ENCODE measurements at regions of chr1 and their contacts with region 1.

Region 1: DNA sequence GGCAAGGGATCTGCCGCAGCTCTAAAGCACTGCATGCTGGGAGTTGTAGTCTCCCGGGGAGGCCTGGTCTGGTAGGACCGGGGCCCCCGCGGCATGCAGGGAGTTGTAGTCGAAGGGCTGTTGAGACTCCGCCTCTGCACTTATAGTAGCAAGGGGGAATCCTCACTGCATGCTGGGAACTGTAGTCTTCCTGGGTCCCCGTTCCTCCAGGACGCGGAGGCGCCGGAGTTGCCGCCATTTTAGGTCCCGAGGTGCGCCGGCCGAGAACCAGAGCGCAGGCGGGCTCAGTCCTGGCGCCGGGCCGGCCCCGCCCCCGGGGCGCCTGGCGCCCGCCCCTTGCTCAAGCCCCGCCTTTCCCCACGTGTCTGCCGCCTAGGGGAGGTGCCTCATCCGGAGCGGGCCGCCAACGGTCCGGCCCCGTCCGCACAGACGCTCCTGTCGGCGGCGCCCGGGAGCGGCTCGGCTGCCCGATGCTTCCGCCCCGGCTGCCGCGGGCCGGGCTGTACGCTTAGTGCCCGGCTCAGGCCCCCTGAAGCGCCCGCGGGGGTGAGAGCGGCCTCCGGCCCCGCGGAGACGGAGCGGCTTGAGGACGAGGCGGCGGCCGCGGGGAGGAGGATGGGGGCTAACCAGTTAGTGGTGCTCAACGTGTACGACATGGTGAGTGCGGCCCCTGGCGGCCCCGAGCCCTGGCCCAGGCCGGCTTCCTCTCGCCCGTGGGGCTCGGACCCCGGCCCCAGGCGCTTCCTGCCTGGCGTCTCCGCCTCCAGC is at the start of gene DESI2:
- DNase-seq: peak; percentile 98
- H3K4me3 Mint-ChIP-seq: no peak within 1 kb of the TSS
- H3K27ac Mint-ChIP-seq: no peak within 1 kb of the TSS
- H3K4me1 Mint-ChIP-seq: peaks cover 7% of the 10 kb centered on the region
- H3K27me3 Mint-ChIP-seq: peaks cover 20% of the 10 kb centered on the region
- CTCF ChIP-seq: peak; percentile 77
- total RNA-seq, gene DESI2: 29.8 and 39.1 TPM in 2 replicates

Region 2: DNA sequence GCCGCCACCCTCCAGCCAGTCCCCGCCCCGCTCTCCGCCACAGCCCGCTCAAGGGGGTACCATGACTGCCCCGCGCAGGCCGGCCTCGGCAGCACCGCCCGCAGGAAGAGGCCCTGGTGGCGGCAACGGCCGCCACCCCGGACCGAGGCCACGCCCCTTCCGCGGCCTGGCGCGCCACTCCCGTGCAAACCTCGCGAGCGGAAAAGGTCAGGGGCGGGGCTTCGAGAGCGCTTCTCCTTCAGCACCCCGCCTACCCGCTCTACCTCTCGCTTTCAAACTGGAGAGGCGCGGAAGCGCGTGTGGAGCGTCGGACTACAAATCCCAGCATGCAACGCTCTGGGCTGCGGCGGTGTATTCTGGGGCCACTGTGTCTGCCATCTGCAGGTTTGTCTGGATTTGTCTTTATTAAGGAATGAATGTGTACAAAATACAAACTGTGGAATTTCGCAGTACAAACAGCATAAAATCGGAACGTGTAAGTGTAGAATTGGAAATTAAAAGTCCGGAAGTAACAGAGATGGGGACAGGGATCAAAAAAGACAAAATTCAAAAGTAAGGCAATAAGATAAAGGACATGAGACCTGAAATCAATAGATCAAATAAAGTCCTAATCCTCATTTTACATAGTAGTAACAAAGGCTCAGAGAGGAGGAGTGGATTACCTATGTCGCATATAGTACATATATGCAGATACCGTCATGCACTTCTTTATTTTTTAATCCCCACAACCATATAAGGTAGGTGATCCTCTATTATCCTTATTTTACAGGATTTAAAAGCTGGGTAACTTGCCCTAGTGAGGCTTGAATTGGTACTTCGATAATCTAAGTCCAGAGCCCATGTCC is 200.7 kb before region 1 on chr1:
- CTCF ChIA-PET with region 1: no interaction called
- intact Hi-C with region 1: loop called (anchors 10 kb)
- DNase-seq: peak; percentile 100
- H3K4me3 Mint-ChIP-seq: peak overlapping the region; percentile 59
- H3K27ac Mint-ChIP-seq: peak overlapping the region; percentile 60
- H3K4me1 Mint-ChIP-seq: peaks cover 45% of the 10 kb centered on the region
- H3K27me3 Mint-ChIP-seq: no peaks in the 10 kb centered on the region
- CTCF ChIP-seq: no peak

Region 3: GRCh38 chr1:244751271-244751895 is 98.5 kb after region 1 on chr1:
- CTCF ChIA-PET with region 1: no interaction called
- intact Hi-C with region 1: no loop called
- DNase-seq: no peak
- H3K4me3 Mint-ChIP-seq: no peak overlapping the region
- H3K27ac Mint-ChIP-seq: no peak overlapping the region
- H3K4me1 Mint-ChIP-seq: no peaks in the 10 kb centered on the region
- H3K27me3 Mint-ChIP-seq: no peaks in the 10 kb centered on the region
- CTCF ChIP-seq: no peak